ENCODE measurements at regions of chr18 and their contacts with region 1.

Region 1: GRCh38 chr18:55415258-55415871 is 172.6 kb downstream of the TCF4 start:
- DNase-seq: peak; percentile 85
- H3K4me3 Mint-ChIP-seq: no peak overlapping the region
- H3K27ac Mint-ChIP-seq: no peak overlapping the region
- H3K4me1 Mint-ChIP-seq: peaks cover 2% of the 10 kb centered on the region
- H3K27me3 Mint-ChIP-seq: peaks cover 7% of the 10 kb centered on the region

Region 2: DNA sequence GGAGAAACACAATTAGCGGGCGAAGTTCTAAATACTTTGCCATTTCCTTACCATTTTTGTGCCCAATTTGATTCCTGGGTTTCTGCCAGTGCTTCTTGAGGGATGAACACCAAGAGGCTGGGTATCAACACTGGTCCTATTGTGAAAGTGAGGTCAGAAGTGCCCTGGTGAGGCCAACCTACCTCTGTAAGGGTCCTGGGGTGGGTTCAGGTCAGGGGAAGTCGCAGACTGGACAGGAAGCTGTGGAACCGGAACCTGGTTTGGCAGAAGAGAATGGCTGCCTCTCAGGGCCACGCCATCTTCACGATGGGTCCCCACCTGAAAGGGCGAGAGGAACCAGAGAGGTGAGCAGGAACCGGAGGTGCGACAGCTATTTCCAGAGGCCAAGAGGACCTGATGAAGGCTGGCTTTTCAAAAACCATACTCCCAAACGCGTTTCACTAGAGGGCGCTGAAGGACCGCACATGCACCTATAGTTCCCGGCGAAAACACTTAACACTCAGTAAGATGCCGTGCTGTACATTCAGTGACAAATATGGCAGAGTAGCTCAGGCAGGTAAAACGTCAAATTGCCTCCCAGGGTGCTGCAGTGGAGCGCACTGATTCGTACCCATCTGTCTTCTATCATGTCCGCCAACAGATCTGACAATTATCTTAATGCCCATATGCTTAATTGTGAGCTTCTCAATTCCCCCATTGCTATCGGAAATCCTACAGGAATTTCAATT is 180.8 kb before region 1 on chr18:
- CTCF ChIA-PET with region 1: interaction called, 7 read pairs
- intact Hi-C with region 1: loop called (anchors 10 kb)
- DNase-seq: peak; percentile 77
- H3K4me3 Mint-ChIP-seq: no peak overlapping the region
- H3K27ac Mint-ChIP-seq: no peak overlapping the region
- H3K4me1 Mint-ChIP-seq: no peaks in the 10 kb centered on the region
- H3K27me3 Mint-ChIP-seq: no peaks in the 10 kb centered on the region

Region 3: DNA sequence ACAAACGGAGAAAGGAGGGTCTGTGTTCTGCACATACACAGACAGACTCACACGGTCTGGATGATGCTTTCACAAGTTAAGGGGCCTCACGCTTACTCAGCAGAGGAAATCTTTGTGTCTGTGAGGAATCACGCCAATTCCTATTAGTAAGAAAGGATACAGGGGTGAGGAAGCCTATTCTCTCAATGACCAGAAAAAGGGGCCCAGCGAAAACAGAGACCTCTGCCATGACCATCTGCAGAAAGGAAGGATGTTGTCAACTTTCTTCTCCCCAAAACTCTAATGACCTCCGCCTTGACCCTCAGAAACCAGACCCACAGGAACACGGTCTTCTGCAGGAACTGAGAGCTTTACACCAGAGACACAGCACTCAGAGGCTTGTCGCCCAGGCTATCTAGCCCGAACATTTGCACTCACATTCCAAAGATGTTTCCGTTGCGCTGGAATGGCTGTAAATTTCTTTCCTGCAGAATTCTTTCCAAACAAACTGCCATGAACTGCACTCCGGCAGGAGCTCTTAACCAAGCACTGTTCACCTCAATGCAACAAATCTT is 13.7 kb before region 1 on chr18:
- CTCF ChIA-PET with region 1: no interaction called
- intact Hi-C with region 1: no loop called
- DNase-seq: no peak
- H3K4me3 Mint-ChIP-seq: no peak overlapping the region
- H3K27ac Mint-ChIP-seq: no peak overlapping the region
- H3K4me1 Mint-ChIP-seq: no peaks in the 10 kb centered on the region
- H3K27me3 Mint-ChIP-seq: peaks cover 1% of the 10 kb centered on the region

Region 4: GRCh38 chr18:55494899-55495298 is 79.5 kb after region 1 on chr18:
- CTCF ChIA-PET with region 1: no interaction called
- intact Hi-C with region 1: no loop called
- DNase-seq: no peak
- H3K4me3 Mint-ChIP-seq: no peak overlapping the region
- H3K27ac Mint-ChIP-seq: no peak overlapping the region
- H3K4me1 Mint-ChIP-seq: peaks cover under 1% of the 10 kb centered on the region
- H3K27me3 Mint-ChIP-seq: peaks cover 28% of the 10 kb centered on the region

Region 5: DNA sequence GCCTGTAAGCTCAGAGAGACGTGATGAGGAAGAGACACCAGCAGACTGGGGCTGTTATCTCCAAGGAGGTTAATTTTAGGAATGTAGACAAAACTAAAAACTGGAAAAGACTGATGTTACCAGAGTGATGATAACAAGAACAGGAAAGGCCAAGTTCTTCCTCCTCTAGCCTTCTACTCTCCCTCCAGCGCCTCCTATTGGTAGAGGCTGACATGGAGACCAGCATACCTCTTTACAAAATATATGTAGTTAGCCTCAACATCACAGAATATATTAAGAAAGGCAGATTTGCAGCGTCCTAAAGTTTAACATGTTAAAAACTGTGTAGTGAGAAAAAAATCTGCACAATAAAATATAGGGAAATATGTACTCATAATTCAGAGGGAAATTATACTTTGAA is 106.6 kb after region 1 on chr18:
- CTCF ChIA-PET with region 1: no interaction called
- intact Hi-C with region 1: loop called (anchors 1 kb)
- DNase-seq: peak; percentile 35
- H3K4me3 Mint-ChIP-seq: no peak overlapping the region
- H3K27ac Mint-ChIP-seq: no peak overlapping the region
- H3K4me1 Mint-ChIP-seq: no peaks in the 10 kb centered on the region
- H3K27me3 Mint-ChIP-seq: no peaks in the 10 kb centered on the region

Region 6: DNA sequence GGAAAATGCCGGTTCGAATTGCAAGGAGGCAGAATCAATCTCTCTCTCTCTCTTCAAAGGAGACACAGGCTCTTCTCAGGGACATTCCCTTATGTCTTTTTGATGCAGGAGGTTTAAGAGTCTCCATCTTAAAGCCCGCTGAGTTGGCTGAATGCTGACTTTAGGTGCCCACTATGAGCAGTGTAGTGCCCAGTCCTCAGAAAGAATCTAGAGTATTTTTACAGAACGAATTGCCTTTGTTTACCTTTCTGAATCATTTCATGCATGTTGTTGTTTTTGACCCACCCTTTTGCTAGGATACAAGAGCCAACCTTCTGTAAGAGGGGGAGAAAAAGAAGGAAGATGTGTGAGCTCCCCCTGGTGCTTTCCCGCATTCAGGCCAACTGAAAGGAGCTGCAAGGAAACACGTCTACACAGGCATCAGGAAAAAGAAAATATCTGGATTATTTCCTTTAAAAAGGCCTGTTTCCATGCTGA is 366.2 kb after region 1 on chr18:
- CTCF ChIA-PET with region 1: no interaction called
- intact Hi-C with region 1: loop called (anchors 1 kb)
- DNase-seq: no peak
- H3K4me3 Mint-ChIP-seq: no peak overlapping the region
- H3K27ac Mint-ChIP-seq: no peak overlapping the region
- H3K4me1 Mint-ChIP-seq: peaks cover 2% of the 10 kb centered on the region
- H3K27me3 Mint-ChIP-seq: peaks cover 42% of the 10 kb centered on the region

Region 7: GRCh38 chr18:55927831-55928230 is 512.5 kb after region 1 on chr18:
- CTCF ChIA-PET with region 1: no interaction called
- intact Hi-C with region 1: no loop called
- DNase-seq: no peak
- H3K4me3 Mint-ChIP-seq: no peak overlapping the region
- H3K27ac Mint-ChIP-seq: no peak overlapping the region
- H3K4me1 Mint-ChIP-seq: no peaks in the 10 kb centered on the region
- H3K27me3 Mint-ChIP-seq: no peaks in the 10 kb centered on the region

Region 8: DNA sequence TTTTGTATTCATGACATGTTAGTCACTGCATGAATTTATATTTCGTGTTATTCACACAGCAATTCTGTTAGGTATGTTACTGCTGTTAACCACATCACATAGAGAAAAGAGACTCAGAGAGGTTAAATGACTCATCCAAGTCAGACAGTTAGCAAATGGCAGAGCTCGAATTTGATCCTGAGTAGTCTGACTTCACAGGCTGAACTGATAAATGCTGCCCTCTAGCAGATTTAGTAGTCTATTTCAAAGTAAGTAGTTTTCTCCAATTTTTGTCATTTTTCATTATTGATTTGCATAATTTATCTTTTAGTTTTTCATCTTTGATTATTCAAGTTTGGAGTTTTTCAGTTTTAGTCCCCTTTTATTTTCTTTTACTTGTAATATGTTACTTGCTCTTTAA is 1294.1 kb after region 1 on chr18:
- CTCF ChIA-PET with region 1: no interaction called
- intact Hi-C with region 1: loop called (anchors 1 kb)
- DNase-seq: peak; percentile 56
- H3K4me3 Mint-ChIP-seq: no peak overlapping the region
- H3K27ac Mint-ChIP-seq: no peak overlapping the region
- H3K4me1 Mint-ChIP-seq: peaks cover 3% of the 10 kb centered on the region
- H3K27me3 Mint-ChIP-seq: no peaks in the 10 kb centered on the region

Measured in activated naive CD4-positive, alpha-beta T cell treated with anti-CD3 and anti-CD28 coated beads for 36 hours (primary cell).